A549 (cell line): ENCODE measurements at regions of chr17 and their contacts with region 1.

Region 1: DNA sequence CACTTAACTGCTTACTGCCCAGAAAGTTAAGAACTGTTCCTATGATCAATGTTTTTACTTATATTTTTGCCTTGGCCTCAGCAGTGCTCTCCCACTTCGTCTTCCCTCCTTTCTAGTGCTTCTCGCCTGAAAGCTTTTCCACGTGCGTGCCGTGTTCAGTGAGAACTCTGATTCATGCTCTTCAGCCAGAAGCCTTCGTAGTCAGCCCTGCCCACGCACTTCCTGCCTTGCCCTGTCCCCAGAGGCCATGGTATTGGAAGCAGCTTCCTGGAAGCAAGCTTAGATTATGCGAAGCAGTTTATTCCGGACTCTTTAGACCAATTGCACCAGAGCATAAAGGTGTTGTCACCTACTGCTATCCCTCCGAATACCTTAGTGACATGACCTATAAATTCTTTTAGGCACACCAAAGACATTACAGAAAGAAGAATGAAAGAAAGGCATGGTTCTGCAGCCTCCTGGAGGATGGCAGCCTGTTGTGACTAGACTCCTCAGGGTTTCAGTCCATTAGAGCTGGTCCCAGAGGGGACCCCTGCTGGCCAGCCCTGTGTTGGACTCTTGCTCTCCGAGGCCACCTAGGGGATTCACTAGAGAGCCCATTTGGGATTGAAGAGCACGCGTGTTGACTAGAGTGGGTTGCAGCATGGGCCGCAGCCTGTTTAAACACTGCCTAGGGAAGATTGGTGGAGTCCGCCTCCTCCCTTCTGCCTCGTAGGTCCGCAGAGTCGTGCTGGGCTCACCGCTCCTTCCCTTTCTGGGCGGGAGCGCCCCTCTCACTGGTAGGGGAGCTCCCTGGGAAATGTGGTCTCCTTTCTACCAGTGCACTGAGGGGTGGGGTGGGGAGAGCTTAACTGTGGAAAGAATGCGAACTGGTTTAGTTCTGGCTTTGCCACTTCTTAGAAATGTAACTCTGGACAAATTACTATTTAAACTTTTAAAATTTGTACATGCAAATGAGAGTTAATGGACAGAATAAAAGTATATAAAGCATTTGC is 105.3 kb downstream of the RPTOR start:
- DNase-seq: peak; percentile 67 to 68
- ATAC-seq: peak; percentile 94 to 98
- H3K4me3 ChIP-seq: no peak overlapping the region
- H3K27ac ChIP-seq: no peak overlapping the region
- H3K4me1 ChIP-seq: no peaks in the 10 kb centered on the region
- CTCF ChIP-seq: peak; percentile 69
- EP300 ChIP-seq: no peak
- POLR2A ChIP-seq: no peak
- RAD21 ChIP-seq: peak; percentile 50 to 63

Region 2: DNA sequence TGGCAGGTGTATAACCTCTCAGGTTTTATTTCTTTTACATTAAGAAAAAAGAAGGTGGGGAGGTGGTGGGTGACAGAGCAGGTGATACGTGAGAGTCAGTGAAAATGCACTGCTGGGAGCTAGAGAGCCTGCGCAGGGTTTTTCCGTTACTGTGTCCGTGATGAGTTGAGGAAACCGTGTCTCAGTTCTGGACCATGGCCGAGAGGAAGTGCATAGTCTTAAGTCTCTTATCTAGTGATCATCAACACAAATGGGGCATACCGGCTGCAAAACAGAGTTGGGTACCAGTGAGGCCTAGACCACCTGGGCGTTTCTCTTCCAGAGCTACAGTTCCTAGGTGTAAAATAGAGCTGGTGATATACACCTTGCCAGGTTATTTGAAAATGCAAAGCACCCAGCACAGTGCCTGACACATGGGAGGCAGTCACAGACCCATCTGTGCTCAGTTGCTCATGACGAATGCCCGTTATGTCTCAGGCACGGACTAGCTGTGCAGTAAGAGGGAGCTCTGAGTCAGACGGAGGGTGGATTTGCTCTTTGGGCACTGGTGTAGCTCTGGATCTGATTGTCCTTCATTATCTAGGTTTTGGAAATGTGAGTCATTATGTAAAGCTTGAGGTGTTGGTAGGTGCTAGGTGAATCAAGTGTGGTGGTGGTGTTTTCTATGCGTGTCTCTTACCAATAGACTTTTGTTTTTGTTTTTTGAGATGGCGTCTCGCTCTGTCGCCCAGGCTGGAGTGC is 44.5 kb before region 1 on chr17:
- CTCF ChIA-PET with region 1: interaction called, 11 read pairs
- POLR2A ChIA-PET with region 1: no interaction called
- DNase-seq: peak; percentile 23 to 40
- ATAC-seq: peak in 1 of 2 experiments; percentile 49; a peak in 3 of 6 replicates
- H3K4me3 ChIP-seq: no peak overlapping the region
- H3K27ac ChIP-seq: no peak overlapping the region
- H3K4me1 ChIP-seq: peaks cover 12% of the 10 kb centered on the region
- CTCF ChIP-seq: no peak
- EP300 ChIP-seq: no peak
- POLR2A ChIP-seq: no peak
- RAD21 ChIP-seq: no peak

Region 3: DNA sequence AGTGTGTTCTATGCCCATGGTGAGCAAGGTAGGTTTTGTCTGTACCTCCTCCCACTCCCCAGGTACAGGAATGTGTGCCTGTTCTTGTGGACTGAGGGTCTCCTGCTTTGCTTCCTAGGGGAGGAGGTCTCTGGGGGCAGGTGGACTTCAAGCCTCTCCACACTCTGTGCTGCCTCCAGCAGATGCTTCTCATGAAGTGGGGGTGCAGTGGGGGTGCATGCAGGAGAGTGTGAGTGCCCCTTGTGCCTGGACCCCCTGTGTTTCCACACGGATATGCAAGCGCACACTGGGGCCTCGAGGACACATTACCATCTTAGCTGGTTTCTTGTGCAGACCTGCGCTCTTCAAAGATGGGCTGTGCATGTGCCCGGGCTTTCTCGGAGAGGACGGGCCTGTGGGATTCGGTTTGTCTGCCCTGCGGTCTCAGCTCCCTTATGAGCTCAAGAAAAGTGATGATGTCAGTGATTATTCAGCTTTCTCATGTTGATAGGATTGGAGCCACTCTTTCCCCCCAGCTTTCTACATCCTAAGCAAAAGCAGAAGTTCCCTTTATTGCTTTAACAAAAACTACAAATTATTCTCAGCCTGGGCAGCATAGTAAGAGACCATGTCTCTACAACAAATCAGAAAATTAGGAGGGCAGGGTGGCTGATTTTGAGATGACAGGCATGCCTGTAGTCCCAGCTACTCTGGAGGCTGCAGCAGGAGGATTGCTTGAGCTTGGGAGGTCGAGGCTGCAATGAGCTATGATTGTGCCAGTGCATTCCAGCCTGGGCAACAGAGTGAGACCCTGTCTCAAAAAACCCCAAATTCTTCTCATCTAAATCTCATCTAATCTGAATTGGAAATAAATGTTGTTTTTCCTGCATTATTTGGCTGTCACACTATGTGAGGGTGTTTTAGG is 18.6 kb before region 1 on chr17:
- CTCF ChIA-PET with region 1: interaction called, 12 read pairs
- POLR2A ChIA-PET with region 1: no interaction called
- DNase-seq: no peak
- ATAC-seq: no peak; a peak in 2 of 6 replicates
- H3K4me3 ChIP-seq: no peak overlapping the region
- H3K27ac ChIP-seq: no peak overlapping the region
- H3K4me1 ChIP-seq: no peaks in the 10 kb centered on the region
- CTCF ChIP-seq: no peak
- EP300 ChIP-seq: no peak
- POLR2A ChIP-seq: no peak
- RAD21 ChIP-seq: no peak

Region 4: GRCh38 chr17:80637048-80637781 is 12.8 kb before region 1 on chr17:
- CTCF ChIA-PET with region 1: interaction called, 15 read pairs
- POLR2A ChIA-PET with region 1: no interaction called
- DNase-seq: no peak
- ATAC-seq: no peak
- H3K4me3 ChIP-seq: no peak overlapping the region
- H3K27ac ChIP-seq: no peak overlapping the region
- H3K4me1 ChIP-seq: no peaks in the 10 kb centered on the region
- CTCF ChIP-seq: no peak
- EP300 ChIP-seq: no peak
- POLR2A ChIP-seq: no peak
- RAD21 ChIP-seq: no peak

Region 5: GRCh38 chr17:80694992-80695912 is 45.3 kb after region 1 on chr17:
- CTCF ChIA-PET with region 1: no interaction called
- POLR2A ChIA-PET with region 1: no interaction called
- DNase-seq: no peak
- ATAC-seq: peak in 1 of 2 experiments; percentile 23; a peak in 3 of 6 replicates
- H3K4me3 ChIP-seq: no peak overlapping the region
- H3K27ac ChIP-seq: peak overlapping the region; percentile 47 to 79; a peak in 4 of 6 replicates
- H3K4me1 ChIP-seq: peaks cover 22% of the 10 kb centered on the region; the same call in 2 of the 3 replicates
- CTCF ChIP-seq: no peak
- EP300 ChIP-seq: no peak
- POLR2A ChIP-seq: no peak
- RAD21 ChIP-seq: no peak

Region 6: GRCh38 chr17:81354954-81355347 is 705.0 kb after region 1 on chr17:
- CTCF ChIA-PET with region 1: no interaction called
- POLR2A ChIA-PET with region 1: no interaction called
- DNase-seq: no peak
- ATAC-seq: no peak
- H3K4me3 ChIP-seq: no peak overlapping the region
- H3K27ac ChIP-seq: no peak overlapping the region
- H3K4me1 ChIP-seq: peaks cover 2% of the 10 kb centered on the region; the same call in 2 of the 3 replicates
- CTCF ChIP-seq: no peak
- EP300 ChIP-seq: no peak
- POLR2A ChIP-seq: no peak
- RAD21 ChIP-seq: no peak